Activated CD4-positive, alpha-beta memory T cell treated with anti-CD3 and anti-CD28 coated beads, Interleukin-2, amount 10 ng/mL, durations not matched to agents 7 days and 5 days (primary cell): ENCODE measurements at regions of chr19 and their contacts with region 1.

Region 1: GRCh38 chr19:49546825-49547565 is 19.2 kb downstream of the RCN3 start:
- DNase-seq: peak; percentile 69
- H3K4me3 Mint-ChIP-seq: peak overlapping the region; percentile 56
- H3K27ac Mint-ChIP-seq: peak overlapping the region; percentile 58
- H3K4me1 Mint-ChIP-seq: peaks cover 45% of the 10 kb centered on the region
- H3K27me3 Mint-ChIP-seq: peaks cover 6% of the 10 kb centered on the region

Region 2: DNA sequence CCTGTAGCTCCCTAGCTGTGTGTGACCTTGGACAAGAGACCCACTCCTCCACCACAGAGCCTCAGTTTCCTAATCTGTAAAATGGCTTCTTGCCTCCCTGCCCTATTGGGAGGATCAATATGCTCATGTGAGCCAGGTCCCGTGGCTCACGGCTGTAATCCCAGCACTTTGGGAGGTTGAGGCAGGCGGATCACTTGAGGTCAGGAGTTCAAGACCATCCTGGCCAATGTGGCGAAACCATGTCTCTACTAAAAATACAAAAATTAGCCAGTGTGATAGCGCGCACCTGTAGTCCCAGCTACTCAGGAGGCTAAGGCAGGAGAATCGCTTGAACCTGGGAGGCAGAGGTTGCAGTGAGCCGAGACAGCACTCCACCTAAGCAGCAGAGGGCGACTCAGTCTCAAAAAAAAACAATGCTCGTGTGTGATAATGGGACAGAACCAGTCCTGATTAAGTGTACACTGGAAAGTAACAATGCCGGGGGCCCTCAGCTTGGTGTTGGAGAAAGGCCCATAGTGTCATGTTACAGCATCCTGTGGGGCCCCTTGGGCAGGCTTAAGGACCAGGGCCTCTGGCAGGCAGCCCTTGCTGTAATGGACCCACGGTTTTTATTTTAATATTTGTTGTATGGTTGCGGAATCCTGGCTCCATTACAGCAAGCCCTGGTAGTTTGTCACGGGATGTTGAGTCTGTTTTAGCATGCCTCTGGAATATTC is 44.0 kb before region 1 on chr19:
- CTCF ChIA-PET with region 1: interaction called, 51 read pairs
- POLR2A ChIA-PET with region 1: interaction called, 7 read pairs
- DNase-seq: peak; percentile 63
- H3K4me3 Mint-ChIP-seq: no peak overlapping the region
- H3K27ac Mint-ChIP-seq: peak overlapping the region; percentile 81
- H3K4me1 Mint-ChIP-seq: peaks cover 51% of the 10 kb centered on the region
- H3K27me3 Mint-ChIP-seq: no peaks in the 10 kb centered on the region

Region 3: DNA sequence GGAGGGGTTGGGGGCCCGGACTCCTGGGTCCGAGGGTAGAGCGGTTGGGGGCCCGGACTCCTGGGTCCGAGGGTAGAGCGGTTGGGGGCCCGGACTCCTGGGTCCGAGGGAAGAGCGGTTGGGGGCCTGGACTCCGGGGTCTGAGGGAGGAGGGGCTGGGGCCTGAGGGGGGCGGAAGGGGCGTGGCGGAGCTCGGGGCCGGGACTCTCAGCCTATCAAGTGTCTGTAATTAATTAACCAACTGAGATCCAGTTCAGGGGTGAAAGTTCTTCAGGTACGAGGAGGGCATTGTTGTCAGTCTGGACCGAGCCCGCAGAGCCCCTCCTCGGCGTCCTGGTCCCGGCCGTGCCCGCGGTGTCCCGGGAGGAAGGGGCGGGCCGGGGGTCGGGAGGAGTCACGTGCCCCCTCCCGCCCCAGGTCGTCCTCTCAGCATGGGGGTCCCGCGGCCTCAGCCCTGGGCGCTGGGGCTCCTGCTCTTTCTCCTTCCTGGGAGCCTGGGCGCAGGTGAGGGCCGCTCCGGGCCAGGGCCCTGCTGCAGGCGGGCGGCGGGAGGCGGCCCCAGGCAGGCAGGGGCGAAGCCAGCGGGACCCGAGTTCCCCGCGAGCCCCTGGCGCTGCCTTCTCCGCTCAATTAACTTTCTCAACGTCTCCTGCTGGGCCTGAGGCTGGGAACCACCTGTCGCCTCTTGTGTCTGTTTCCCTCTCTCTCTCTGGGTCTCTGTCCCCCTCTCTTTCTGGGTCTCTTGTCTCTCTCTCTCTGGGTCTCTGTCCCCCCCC is 33.8 kb before region 1 on chr19:
- CTCF ChIA-PET with region 1: interaction called, 31 read pairs
- POLR2A ChIA-PET with region 1: interaction called, 5 read pairs
- DNase-seq: no peak
- H3K4me3 Mint-ChIP-seq: peak overlapping the region; percentile 69
- H3K27ac Mint-ChIP-seq: peak overlapping the region; percentile 62
- H3K4me1 Mint-ChIP-seq: peaks cover 25% of the 10 kb centered on the region
- H3K27me3 Mint-ChIP-seq: no peaks in the 10 kb centered on the region

Region 4: DNA sequence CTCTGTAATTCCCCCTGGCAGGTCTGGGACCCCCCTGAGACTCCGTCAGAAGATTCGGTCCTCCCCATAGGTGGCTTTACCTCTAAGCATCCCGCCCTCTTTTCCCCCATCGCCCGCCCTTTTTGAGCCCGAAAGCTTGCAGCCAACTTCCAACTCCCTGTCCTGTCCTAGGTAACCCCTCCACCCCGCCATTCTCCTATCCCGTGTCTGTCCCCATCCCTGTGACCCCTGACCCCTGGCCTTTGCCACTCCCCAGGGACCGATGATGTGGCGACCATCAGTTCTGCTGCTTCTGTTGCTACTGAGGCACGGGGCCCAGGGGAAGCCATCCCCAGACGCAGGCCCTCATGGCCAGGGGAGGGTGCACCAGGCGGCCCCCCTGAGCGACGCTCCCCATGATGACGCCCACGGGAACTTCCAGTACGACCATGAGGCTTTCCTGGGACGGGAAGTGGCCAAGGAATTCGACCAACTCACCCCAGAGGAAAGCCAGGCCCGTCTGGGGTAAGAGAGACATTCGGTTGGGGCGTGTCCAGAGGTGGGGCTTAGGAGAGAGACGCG is 18.7 kb before region 1 on chr19:
- CTCF ChIA-PET with region 1: interaction called, 39 read pairs
- POLR2A ChIA-PET with region 1: interaction called, 11 read pairs
- DNase-seq: no peak
- H3K4me3 Mint-ChIP-seq: peak overlapping the region; percentile 70
- H3K27ac Mint-ChIP-seq: no peak overlapping the region
- H3K4me1 Mint-ChIP-seq: peaks cover 22% of the 10 kb centered on the region
- H3K27me3 Mint-ChIP-seq: peaks cover 21% of the 10 kb centered on the region

Region 5: DNA sequence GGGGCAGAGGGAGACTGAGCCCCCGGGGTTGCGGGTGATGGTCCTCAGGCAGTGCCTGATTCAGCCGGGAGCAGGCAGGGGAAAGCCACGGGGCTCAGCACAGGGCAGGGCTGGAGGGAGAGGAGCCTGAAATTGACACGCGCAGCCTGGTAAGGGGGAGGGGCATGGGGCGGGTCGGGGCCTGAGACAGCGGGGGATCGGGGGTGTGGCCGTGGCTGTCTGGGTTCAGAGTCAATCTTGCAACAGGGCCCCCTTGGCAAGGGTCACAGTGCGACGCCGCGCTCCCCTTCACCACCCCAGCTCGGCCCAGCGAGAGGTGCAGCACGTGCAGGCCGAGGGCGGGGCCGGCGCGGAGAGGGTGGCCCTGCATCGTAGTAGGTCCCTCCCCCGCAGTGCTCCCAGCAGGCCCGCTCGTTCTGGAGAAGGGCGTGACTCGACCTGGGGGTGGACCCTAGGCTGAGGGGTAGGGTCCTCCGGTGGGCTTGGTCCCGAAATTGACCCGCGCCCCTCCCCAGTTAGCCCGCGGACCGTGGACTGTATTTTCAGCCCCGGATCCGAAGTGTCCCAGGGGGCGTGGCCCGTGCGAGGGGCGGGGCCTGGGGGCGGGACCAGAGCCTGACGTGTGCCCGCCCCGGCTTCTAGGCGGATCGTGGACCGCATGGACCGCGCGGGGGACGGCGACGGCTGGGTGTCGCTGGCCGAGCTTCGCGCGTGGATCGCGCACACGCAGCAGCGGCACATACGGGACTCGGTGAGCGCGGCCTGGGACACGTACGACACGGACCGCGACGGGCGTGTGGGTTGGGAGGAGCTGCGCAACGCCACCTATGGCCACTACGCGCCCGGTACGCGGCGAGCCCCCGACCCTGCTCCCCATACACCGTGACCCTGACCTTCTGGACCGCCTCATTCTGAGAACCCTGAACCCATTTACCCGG is 13.2 kb before region 1 on chr19:
- CTCF ChIA-PET with region 1: interaction called, 39 read pairs
- POLR2A ChIA-PET with region 1: interaction called, 11 read pairs
- DNase-seq: peak; percentile 85
- H3K4me3 Mint-ChIP-seq: peak overlapping the region; percentile 76
- H3K27ac Mint-ChIP-seq: peak overlapping the region; percentile 31
- H3K4me1 Mint-ChIP-seq: peaks cover 26% of the 10 kb centered on the region
- H3K27me3 Mint-ChIP-seq: peaks cover 14% of the 10 kb centered on the region

Region 6: GRCh38 chr19:49580264-49581006 is 33.4 kb after region 1 on chr19 and contains the start of gene NOSIP:
- CTCF ChIA-PET with region 1: interaction called, 10 read pairs
- POLR2A ChIA-PET with region 1: interaction called, 4 read pairs
- DNase-seq: peak; percentile 98
- H3K4me3 Mint-ChIP-seq: peak within 1 kb of the TSS; percentile 89
- H3K27ac Mint-ChIP-seq: peak within 1 kb of the TSS; percentile 82
- H3K4me1 Mint-ChIP-seq: peaks cover 33% of the 10 kb centered on the region
- H3K27me3 Mint-ChIP-seq: no peaks in the 10 kb centered on the region
- total RNA-seq, gene NOSIP: 162 to 163 TPM